Activated CD8-positive, alpha-beta T cell treated with anti-CD3 and anti-CD28 coated beads, Interleukin-2, amount 10 ng/mL, durations not matched to agents 7 days and 5 days (primary cell): ENCODE measurements at regions of chr1 and their contacts with region 1.

Region 1: GRCh38 chr1:15696956-15697521 is 12.9 kb downstream of the PLEKHM2 start:
- DNase-seq: peak; percentile 61
- ATAC-seq: peak; percentile 85
- H3K4me3 Mint-ChIP-seq: peak overlapping the region; percentile 78
- H3K27ac Mint-ChIP-seq: peak overlapping the region; percentile 97
- H3K4me1 Mint-ChIP-seq: peaks cover 36% of the 10 kb centered on the region
- H3K27me3 Mint-ChIP-seq: no peaks in the 10 kb centered on the region

Region 2: DNA sequence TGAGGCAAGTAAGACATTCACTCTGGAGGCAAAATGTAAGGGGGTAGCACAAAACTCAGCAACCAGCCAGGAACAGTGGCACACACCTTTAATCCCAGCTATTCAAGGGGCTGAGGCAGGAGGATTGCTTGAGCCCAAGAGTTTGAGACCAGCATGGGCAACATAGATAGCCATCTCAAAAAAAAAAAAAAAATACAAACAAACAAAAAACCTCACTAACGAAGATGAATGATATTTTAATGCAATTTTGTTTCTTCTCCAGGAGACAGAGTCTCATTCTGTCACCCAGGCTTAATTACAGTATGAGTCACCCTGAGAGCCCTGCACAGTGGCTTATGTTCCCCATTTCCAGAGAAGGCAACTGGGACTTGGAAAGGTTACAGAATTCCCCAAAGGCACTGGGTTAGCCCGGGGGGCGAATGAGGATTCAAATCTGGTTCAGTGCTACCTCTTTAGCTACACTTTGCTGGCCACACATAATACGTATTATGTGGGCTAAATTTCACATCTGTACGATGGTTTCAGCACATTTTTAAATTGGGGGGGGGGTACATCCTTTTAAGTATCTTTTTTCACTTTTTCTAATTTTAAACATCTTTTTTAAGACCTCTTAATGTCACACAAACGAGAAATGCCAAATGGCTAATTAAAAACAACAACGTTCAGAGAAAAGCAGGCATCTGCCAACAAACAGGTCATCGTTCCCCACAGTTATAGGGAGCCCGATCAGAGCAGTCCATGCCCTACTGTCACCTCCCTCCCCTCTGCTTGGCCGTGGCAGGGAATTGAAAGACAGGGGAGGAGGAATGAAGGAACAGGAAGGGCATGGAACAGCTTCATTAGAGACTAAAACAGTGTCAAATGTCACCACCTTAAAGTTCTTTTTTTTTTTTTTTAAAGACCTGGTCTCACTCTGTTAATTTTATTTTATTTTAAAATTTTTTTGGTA is 237.0 kb before region 1 on chr1:
- CTCF ChIA-PET with region 1: no interaction called
- POLR2A ChIA-PET with region 1: no interaction called
- DNase-seq: no peak
- ATAC-seq: no peak
- H3K4me3 Mint-ChIP-seq: no peak overlapping the region
- H3K27ac Mint-ChIP-seq: no peak overlapping the region
- H3K4me1 Mint-ChIP-seq: no peaks in the 10 kb centered on the region
- H3K27me3 Mint-ChIP-seq: peaks cover 2% of the 10 kb centered on the region

Region 3: GRCh38 chr1:15684468-15685291 is 12.4 kb before region 1 on chr1:
- CTCF ChIA-PET with region 1: interaction called, 11 read pairs
- POLR2A ChIA-PET with region 1: interaction called, 27 read pairs
- DNase-seq: peak; percentile 46
- ATAC-seq: peak; percentile 60
- H3K4me3 Mint-ChIP-seq: peak overlapping the region; percentile 87
- H3K27ac Mint-ChIP-seq: peak overlapping the region; percentile 89
- H3K4me1 Mint-ChIP-seq: peaks cover 27% of the 10 kb centered on the region
- H3K27me3 Mint-ChIP-seq: no peaks in the 10 kb centered on the region